Activated CD4-positive, alpha-beta T cell treated with anti-CD3 and anti-CD28 coated beads, Interleukin-2, amount 10 ng/mL, durations not matched to agents 7 days and 5 days (primary cell): ENCODE measurements at regions of chr9 and their contacts with region 1.

Region 1: DNA sequence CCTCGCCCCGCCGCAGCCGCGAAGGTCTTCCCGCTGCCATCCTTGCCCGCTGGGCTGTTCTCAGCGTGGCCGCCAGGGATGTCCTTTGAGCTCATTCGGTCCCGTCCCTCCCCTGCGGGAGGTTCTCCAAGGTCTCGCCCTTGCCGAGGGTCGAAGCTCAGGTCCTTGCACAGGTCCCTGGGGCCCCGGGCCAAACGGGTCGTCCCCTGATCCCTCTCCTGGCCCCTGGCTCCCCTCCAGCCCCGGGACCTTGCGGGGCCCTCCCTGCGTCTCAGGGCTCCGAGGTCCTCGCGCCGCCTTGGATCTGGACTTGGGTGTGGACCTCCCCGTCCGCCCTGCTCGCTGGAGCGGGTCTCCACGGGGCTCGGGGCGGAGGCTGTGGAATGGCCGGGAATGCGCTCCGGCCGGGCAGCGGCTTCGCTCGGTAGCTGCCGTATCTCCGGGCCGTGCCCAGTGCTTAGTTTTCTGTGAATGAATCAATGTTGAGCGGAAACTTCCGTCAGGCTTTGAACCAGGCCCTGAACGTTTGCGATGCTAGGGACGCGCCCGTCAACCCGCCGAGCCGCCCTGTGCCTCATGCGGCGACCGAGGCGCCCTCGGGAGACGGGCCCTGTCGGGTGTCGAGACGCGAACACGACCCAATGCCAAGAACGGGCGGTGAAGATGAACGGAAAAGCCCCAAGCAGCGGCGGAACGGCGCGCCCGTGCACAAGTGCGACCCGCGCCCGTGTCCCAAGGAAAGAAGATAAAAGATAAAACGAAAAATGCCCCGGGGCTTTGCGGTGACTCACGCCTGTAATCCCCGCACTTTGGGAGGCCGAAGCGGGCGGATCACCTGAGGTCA is 789 bp downstream of the RNU6ATAC start:
- DNase-seq: peak; percentile 69
- H3K4me3 Mint-ChIP-seq: no peak overlapping the region
- H3K27ac Mint-ChIP-seq: no peak overlapping the region
- H3K4me1 Mint-ChIP-seq: peaks cover 24% of the 10 kb centered on the region
- H3K27me3 Mint-ChIP-seq: no peaks in the 10 kb centered on the region

Region 2: DNA sequence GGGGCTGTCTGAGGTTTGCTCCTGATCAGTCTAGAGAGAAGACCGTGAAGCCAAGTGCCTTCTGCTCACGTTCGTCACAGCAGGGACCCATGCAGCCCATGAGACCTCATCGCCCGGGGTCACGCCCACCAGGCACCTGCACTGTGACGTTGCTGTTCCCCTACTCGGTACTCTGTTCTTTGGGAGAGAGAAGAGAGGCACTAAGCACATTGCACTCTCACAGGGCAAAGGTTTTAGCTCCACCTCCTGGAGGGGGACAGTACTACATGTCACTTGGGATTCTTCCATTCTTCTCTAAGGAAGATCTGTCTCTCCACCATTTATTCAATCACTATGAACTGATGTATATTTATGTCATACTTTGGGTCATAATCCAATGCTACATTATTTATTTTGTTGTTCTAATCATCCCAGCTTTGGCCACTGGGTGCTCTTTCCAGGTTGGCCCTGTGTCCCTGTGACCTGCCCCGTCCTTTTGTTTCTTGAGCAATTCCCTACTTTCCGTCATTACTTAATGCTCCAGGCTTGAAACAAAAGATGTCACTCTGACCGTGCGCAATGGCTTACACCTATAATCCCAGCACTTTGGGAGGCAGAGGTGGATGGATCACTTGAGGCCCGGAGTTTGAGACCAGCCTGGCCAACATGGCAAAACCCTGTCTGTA is 64.3 kb before region 1 on chr9:
- CTCF ChIA-PET with region 1: no interaction called
- POLR2A ChIA-PET with region 1: no interaction called
- DNase-seq: peak; percentile 72
- H3K4me3 Mint-ChIP-seq: no peak overlapping the region
- H3K27ac Mint-ChIP-seq: no peak overlapping the region
- H3K4me1 Mint-ChIP-seq: no peaks in the 10 kb centered on the region
- H3K27me3 Mint-ChIP-seq: peaks cover 1% of the 10 kb centered on the region

Region 3: DNA sequence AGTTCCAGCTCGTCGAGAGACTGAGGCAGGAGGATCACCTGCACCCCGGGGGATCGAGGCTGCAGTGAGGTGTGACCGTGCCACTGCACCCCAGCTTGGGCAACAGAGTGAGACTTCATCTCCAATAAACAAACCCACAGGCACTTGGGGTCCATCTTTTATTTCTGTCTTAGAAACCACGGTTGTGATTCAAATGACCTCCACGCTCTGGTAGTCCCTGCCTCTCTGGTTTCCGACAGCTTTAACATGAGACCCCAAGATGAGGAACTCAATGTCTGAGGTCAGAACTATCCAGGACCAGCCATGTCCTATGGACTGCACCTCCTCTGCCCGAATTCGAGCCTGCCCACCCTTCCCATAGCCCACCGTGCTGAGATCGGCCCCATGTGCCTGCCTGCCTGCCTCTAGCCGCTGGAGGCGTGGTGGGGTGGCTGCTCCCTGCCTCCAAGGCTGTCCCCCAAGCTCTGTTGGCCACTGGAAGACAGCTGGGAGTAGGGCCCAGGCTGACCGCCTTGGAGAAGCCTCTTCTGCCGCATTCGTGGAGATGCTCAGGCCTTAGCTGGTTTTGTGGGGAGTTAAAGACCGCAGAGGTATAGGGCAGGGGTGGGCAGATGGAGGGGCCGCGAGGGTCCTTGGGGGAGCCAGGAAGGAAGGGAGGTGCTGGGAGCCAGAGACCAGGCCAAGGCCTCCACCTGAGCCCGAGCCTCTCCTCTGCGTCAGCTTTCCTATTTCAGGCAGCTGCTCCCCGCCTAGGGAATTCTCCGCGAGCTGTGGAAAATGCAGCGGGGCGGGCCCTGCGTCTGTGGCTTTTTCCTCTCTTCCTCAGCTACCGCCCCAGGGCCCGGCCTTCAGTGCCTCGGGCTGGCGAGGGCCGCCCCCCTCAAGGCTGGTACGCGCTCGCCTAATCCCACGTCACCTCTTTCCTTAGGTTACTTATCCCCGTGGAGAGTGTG is 34.6 kb before region 1 on chr9:
- CTCF ChIA-PET with region 1: no interaction called
- POLR2A ChIA-PET with region 1: no interaction called
- DNase-seq: no peak
- H3K4me3 Mint-ChIP-seq: no peak overlapping the region
- H3K27ac Mint-ChIP-seq: no peak overlapping the region
- H3K4me1 Mint-ChIP-seq: peaks cover 4% of the 10 kb centered on the region
- H3K27me3 Mint-ChIP-seq: no peaks in the 10 kb centered on the region

Region 4: GRCh38 chr9:134146774-134147500 is 16.6 kb before region 1 on chr9:
- CTCF ChIA-PET with region 1: interaction called, 19 read pairs
- POLR2A ChIA-PET with region 1: no interaction called
- DNase-seq: no peak
- H3K4me3 Mint-ChIP-seq: no peak overlapping the region
- H3K27ac Mint-ChIP-seq: no peak overlapping the region
- H3K4me1 Mint-ChIP-seq: peaks cover 11% of the 10 kb centered on the region
- H3K27me3 Mint-ChIP-seq: no peaks in the 10 kb centered on the region